ENCODE measurements at regions of chr6 and their contacts with region 1.

Region 1: DNA sequence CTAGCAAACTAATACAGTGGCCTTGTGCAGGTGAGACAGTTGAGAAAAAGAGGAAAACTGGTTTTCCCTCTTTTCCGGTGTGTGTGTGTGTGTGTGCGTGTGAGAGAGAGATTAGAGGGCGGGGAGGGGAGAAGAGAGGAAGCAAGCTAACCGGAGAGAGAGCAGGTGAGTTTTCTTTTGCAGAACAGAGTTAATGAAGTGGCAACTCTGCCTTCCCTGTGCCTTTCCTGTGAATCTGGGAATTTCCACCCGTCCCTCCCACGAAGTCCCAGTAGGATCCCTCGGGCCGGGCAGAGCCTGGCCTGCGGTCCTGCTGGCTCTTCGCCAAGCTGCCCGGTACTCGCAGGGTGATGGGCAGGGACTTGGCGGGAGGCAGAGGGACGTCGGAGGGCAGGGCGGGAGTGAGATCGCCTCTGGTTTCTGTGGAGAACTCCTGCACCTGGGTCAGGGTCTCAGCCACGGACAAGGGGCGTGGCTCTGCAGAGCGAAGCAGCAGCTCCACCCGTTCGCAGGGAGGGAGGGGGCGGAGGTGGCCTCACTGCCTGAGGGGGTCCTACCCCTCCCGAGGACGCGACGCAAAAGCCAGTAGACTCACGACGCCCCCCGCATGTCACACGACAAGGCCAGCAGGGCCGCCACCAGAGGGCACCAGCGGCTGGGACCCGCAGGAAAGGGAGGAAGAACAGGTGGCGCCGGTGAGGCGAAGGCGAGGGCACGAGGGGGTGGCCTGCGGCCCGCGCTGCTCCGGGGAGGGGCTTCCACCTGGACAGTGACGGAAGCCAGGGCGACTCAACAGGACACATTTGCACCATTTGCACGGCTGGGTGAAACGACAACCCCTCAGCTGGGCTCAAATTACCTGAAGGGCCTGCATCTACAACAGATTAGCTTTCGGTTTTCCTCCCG is 51.2 kb upstream of the RNF182 start:
- DNase-seq: peak; percentile 49
- H3K4me3 ChIP-seq: no peak overlapping the region
- H3K27ac ChIP-seq: no peak overlapping the region
- H3K4me1 ChIP-seq: no peaks in the 10 kb centered on the region
- CTCF ChIP-seq: peak; percentile 84

Region 2: GRCh38 chr6:14046476-14047068 is 173.0 kb after region 1 on chr6:
- CTCF ChIA-PET with region 1: no interaction called
- POLR2A ChIA-PET with region 1: no interaction called
- intact Hi-C with region 1: loop called (anchors 10 kb)
- DNase-seq: peak; percentile 63
- H3K4me3 ChIP-seq: no peak overlapping the region
- H3K27ac ChIP-seq: no peak overlapping the region
- H3K4me1 ChIP-seq: no peaks in the 10 kb centered on the region
- CTCF ChIP-seq: peak; percentile 83

Region 3: GRCh38 chr6:15444881-15445280 is 1571.3 kb after region 1 on chr6:
- CTCF ChIA-PET with region 1: no interaction called
- POLR2A ChIA-PET with region 1: no interaction called
- intact Hi-C with region 1: no loop called
- DNase-seq: peak; percentile 22
- H3K4me3 ChIP-seq: no peak overlapping the region
- H3K27ac ChIP-seq: no peak overlapping the region
- H3K4me1 ChIP-seq: peaks cover 13% of the 10 kb centered on the region
- CTCF ChIP-seq: peak; percentile 50; the same call in 1 of the 2 replicates